T-cell (primary cell): ENCODE measurements at regions of chr15 and their contacts with region 1.

Region 1: DNA sequence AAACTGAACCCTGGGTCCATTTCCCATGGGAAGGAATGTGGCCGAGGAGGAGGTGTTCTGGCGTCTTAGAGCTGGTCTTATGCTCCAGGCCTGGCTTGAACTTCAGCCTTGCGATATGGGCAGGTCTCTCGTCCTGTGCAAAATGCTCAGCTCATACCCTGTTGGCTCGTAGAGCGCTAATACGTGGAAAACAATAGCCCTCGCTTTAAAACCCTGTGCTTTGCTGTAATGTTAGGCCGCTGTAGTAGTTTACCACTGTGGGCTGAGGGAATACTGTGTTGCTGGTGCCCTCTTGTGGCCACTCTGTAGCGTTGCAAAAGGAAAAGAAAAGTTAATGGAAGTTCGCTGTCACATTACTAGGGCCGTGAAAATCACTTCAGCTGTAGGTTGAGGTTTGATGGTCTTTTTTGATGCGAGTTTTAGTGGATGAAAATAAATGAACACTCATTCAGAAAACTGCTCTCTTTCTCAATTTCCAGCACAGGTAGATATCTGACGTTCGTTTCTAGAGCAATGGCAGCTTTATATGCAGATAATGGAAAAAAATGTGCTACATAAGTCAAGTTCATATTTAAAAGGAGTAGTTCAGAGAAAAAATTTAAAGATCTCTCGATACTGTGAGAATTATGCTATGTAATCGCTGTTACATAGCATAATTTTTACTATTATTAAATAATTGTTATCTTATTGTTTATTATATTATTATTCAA is 92.9 kb downstream of the MCTP2 start:
- DNase-seq: peak in 31 of 35 experiments; percentile 9 to 82 (median 41)
- ATAC-seq: peak; percentile 72 to 81 (median 74)
- H3K4me3 ChIP-seq: no peak overlapping the region
- H3K4me3 Mint-ChIP-seq: no peak overlapping the region
- H3K27ac ChIP-seq: no peak overlapping the region
- H3K27ac Mint-ChIP-seq: no peak overlapping the region
- H3K4me1 ChIP-seq: peaks cover 0 to 8% of the 10 kb centered on the region in 2 experiments
- H3K4me1 Mint-ChIP-seq: peaks cover 6 to 18% (median 8%) of the 10 kb centered on the region in 3 donors
- H3K27me3 ChIP-seq: no peaks in the 10 kb centered on the region
- H3K27me3 Mint-ChIP-seq: no peaks in the 10 kb centered on the region

Region 2: DNA sequence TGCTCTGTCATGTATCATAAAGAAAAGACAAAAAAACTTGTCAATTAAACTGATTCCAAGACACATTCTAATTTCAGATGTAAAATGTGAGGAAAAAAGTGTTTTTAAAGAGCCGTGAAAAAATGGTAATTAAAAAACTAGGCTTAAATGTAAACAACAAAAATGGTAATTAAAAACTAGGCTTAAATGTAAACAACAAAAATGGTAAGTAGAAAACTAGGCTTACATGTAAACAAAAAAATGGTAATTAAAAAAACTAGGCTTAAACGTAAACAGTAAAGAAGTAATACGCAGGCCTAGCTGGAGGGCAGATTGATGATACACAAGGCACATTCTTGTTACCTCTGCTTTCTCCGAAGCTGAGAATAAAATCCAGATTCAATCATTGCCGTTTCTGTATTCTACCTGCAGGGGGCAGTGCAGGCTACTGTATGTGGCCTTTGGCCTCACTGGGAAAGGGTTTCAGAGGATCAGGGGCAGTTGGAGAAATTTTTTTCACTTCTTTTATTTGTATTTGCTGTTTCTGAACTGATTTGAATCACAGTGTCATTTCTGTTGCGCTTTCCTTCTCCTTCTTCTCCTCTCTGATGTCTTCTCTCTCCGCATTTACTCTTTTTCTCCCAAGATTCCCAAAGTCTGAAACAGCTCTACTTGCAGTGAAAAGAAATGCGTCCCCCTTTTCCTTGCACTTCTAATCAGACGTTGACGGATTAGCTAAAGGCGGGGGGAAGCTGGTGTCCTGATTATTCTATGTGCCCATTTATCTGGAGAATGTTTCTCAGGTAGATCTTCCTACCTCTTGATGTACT is 160.1 kb before region 1 on chr15:
- CTCF ChIA-PET with region 1: interaction called, 43 to 89 read pairs
- POLR2A ChIA-PET with region 1: no interaction called
- DNase-seq: peak in 27 of 35 experiments; percentile 5 to 73 (median 37)
- ATAC-seq: no peak
- H3K4me3 ChIP-seq: no peak overlapping the region
- H3K4me3 Mint-ChIP-seq: no peak overlapping the region
- H3K27ac ChIP-seq: no peak overlapping the region
- H3K27ac Mint-ChIP-seq: no peak overlapping the region
- H3K4me1 ChIP-seq: no peaks in the 10 kb centered on the region
- H3K4me1 Mint-ChIP-seq: no peaks in the 10 kb centered on the region
- H3K27me3 ChIP-seq: no peaks in the 10 kb centered on the region
- H3K27me3 Mint-ChIP-seq: peaks cover 7 to 9% of the 10 kb centered on the region in 2 donors

Region 3: GRCh38 chr15:94230956-94231722 is 93.1 kb before region 1 on chr15 and contains the start of gene MCTP2:
- CTCF ChIA-PET with region 1: interaction called in 1 of 2 experiments, 25 read pairs
- POLR2A ChIA-PET with region 1: interaction called in 1 of 2 experiments, 3 read pairs
- DNase-seq: peak; percentile 63 to 89 (median 78)
- ATAC-seq: peak; percentile 89 to 91 (median 90)
- H3K4me3 ChIP-seq: peak within 1 kb of the TSS; percentile 59 to 72
- H3K4me3 Mint-ChIP-seq: peak within 1 kb of the TSS; percentile 88 to 94 (median 91)
- H3K27ac ChIP-seq: peak within 1 kb of the TSS; percentile 87
- H3K27ac Mint-ChIP-seq: peak within 1 kb of the TSS; percentile 91 to 93
- H3K4me1 ChIP-seq: peaks cover 9 to 26% of the 10 kb centered on the region in 2 experiments
- H3K4me1 Mint-ChIP-seq: peaks cover 37 to 69% (median 47%) of the 10 kb centered on the region in 3 donors
- H3K27me3 ChIP-seq: no peaks in the 10 kb centered on the region
- H3K27me3 Mint-ChIP-seq: no peaks in the 10 kb centered on the region
- total RNA-seq, gene MCTP2: 16.0 to 31.3 (median 22.4) TPM

Region 4: DNA sequence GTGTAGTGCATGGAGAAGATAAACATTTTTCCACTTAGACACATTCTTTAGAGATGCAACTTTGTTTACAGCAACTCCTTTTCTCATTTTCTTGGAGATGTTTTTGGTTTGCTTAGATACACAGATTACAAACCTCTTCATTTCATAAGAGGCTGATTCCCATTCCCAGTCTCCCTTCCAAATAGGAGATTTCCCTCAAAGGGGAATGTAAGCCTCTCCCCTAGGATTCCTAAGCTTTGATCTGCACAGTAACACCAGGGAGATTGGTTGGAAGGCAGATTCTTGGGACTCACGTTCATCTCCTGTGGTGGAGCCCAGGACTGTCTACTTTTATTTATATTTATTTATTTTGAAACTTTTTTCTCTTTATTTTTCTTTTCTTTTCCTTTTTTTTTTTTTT is 29.7 kb before region 1 on chr15:
- CTCF ChIA-PET with region 1: no interaction called
- POLR2A ChIA-PET with region 1: no interaction called
- DNase-seq: no peak
- ATAC-seq: no peak
- H3K4me3 ChIP-seq: no peak overlapping the region
- H3K4me3 Mint-ChIP-seq: no peak overlapping the region
- H3K27ac ChIP-seq: no peak overlapping the region
- H3K27ac Mint-ChIP-seq: no peak overlapping the region
- H3K4me1 ChIP-seq: peaks cover 5 to 8% of the 10 kb centered on the region in 2 experiments
- H3K4me1 Mint-ChIP-seq: peaks cover 34 to 58% (median 44%) of the 10 kb centered on the region in 3 donors
- H3K27me3 ChIP-seq: no peaks in the 10 kb centered on the region
- H3K27me3 Mint-ChIP-seq: no peaks in the 10 kb centered on the region

Region 5: GRCh38 chr15:94306700-94307650 is 17.3 kb before region 1 on chr15:
- CTCF ChIA-PET with region 1: interaction called in 1 of 2 experiments, 14 read pairs
- POLR2A ChIA-PET with region 1: no interaction called
- DNase-seq: peak in 5 of 35 experiments; percentile 6 to 57 (median 20)
- ATAC-seq: peak in 1 of 4 experiments; percentile 55
- H3K4me3 ChIP-seq: no peak overlapping the region
- H3K4me3 Mint-ChIP-seq: no peak overlapping the region
- H3K27ac ChIP-seq: peak overlapping the region; percentile 60
- H3K27ac Mint-ChIP-seq: peak overlapping the region in 1 of 2 donors; percentile 47
- H3K4me1 ChIP-seq: peaks cover 0 to 29% of the 10 kb centered on the region in 2 experiments
- H3K4me1 Mint-ChIP-seq: peaks cover 29 to 39% (median 31%) of the 10 kb centered on the region in 3 donors
- H3K27me3 ChIP-seq: no peaks in the 10 kb centered on the region
- H3K27me3 Mint-ChIP-seq: no peaks in the 10 kb centered on the region